ENCODE measurements at regions of chr10 and their contacts with region 1.

Region 1: DNA sequence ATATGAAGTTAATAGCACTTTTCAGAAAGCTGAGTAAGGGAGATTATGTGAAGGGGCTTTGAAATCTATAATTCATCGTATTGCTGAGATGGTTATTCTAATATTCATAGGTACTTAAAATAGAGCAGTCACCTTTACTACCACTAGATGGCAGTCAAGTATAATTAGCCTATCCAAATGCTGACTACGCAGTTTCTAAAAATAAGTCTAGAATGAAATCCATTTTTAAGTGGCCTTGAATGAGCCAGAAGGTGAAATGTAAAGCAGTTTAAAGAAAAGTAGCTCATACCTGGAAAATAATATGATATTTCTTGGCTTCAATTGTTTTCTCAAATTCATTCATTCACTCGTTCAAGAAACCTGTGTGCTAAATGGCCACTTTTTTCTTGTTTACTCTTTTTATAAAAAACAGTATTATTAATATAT is 1277.1 kb downstream of the GATA3 start:
- DNase-seq: no peak
- ATAC-seq: peak; percentile 79
- H3K4me3 ChIP-seq: no peak overlapping the region
- H3K27ac ChIP-seq: no peak overlapping the region
- H3K4me1 ChIP-seq: no peaks in the 10 kb centered on the region
- H3K27me3 ChIP-seq: no peaks in the 10 kb centered on the region
- CTCF ChIP-seq: peak; percentile 59 to 78 (median 66)
- EP300 ChIP-seq: no peak
- POLR2A ChIP-seq: no peak
- RAD21 ChIP-seq: peak; percentile 78

Region 2: GRCh38 chr10:9043466-9043865 is 288.1 kb before region 1 on chr10:
- CTCF ChIA-PET with region 1: no interaction called
- POLR2A ChIA-PET with region 1: no interaction called
- RAD21 ChIA-PET with region 1: no interaction called
- SMC1A ChIA-PET with region 1: no interaction called
- in situ Hi-C with region 1: no loop called
- intact Hi-C with region 1: no loop called
- DNase-seq: no peak
- ATAC-seq: no peak
- H3K4me3 ChIP-seq: no peak overlapping the region
- H3K27ac ChIP-seq: no peak overlapping the region
- H3K4me1 ChIP-seq: no peaks in the 10 kb centered on the region
- H3K27me3 ChIP-seq: no peaks in the 10 kb centered on the region
- CTCF ChIP-seq: no peak
- EP300 ChIP-seq: no peak
- POLR2A ChIP-seq: no peak
- RAD21 ChIP-seq: no peak

Region 3: DNA sequence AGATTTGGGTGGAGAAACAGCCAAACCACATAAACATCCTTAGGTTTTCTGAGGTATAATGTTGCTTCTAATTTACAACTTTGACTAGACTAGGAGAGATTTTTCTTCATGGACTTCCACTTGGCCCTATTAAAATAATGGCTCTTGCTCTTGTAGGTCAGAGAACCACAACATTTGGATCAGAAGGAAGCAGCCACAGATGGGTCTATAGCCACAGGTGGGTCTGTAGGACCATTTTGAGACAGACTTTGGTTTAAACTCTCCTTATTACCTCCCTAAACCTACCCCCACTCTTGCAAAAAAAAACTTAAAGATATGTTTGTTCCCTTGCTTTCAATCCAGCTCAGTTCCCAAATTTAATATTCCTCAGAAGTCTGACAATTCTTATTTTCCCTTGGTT is 16.3 kb before region 1 on chr10:
- CTCF ChIA-PET with region 1: interaction called, 4 read pairs
- POLR2A ChIA-PET with region 1: no interaction called
- RAD21 ChIA-PET with region 1: no interaction called
- SMC1A ChIA-PET with region 1: interaction called, 4 read pairs
- in situ Hi-C with region 1: no loop called
- intact Hi-C with region 1: loop called (anchors 1 kb)
- DNase-seq: no peak
- ATAC-seq: no peak
- H3K4me3 ChIP-seq: no peak overlapping the region
- H3K27ac ChIP-seq: no peak overlapping the region
- H3K4me1 ChIP-seq: no peaks in the 10 kb centered on the region
- H3K27me3 ChIP-seq: no peaks in the 10 kb centered on the region; a peak in 1 of 4 replicates
- CTCF ChIP-seq: no peak
- EP300 ChIP-seq: no peak
- POLR2A ChIP-seq: no peak
- RAD21 ChIP-seq: no peak

Region 4: GRCh38 chr10:10677479-10677878 is 1345.9 kb after region 1 on chr10:
- CTCF ChIA-PET with region 1: interaction called, 3 read pairs
- POLR2A ChIA-PET with region 1: no interaction called
- RAD21 ChIA-PET with region 1: no interaction called
- SMC1A ChIA-PET with region 1: no interaction called
- in situ Hi-C with region 1: loop called (anchors 5 kb)
- intact Hi-C with region 1: loop called (anchors 1 kb)
- DNase-seq: peak; percentile 11
- ATAC-seq: peak; percentile 83
- H3K4me3 ChIP-seq: no peak overlapping the region
- H3K27ac ChIP-seq: no peak overlapping the region
- H3K4me1 ChIP-seq: 0 out of 2 replicates have a peak, but pooled peaks cover 5% of the 10 kb centered on the region
- H3K27me3 ChIP-seq: no peaks in the 10 kb centered on the region
- CTCF ChIP-seq: peak in 2 of 3 experiments; percentile 47 to 51; a peak in 4 of 6 replicates
- EP300 ChIP-seq: no peak
- POLR2A ChIP-seq: no peak
- RAD21 ChIP-seq: peak; percentile 73

Region 5: DNA sequence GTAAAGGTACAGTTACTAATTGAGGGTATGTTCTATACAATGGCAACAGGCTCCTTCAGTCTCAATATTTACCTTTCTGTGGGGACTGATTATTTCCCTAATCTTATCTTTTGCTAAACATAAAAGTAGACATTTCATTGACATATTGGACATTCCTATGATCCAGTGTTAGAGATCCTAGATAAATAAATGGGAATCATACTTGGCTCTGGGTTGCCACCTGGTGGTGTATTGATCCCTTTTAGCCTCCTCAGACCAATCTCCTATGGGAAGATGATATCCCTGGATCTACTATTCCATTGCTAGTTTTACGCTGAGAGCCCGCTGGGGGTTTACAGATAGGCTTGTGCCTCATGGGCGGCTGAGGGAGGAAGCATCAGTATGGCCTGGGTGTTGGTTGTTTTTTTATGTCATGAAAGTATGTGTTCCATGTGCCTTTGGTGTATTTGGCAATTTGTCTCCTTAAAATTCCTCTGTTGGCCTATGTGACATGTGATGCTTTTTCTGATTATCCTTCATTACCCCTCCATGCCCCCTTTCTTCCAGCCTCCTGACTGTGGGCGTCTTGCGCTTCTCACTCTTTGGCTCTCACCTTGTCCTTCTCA is 1704.9 kb after region 1 on chr10:
- CTCF ChIA-PET with region 1: no interaction called
- POLR2A ChIA-PET with region 1: no interaction called
- RAD21 ChIA-PET with region 1: no interaction called
- SMC1A ChIA-PET with region 1: no interaction called
- in situ Hi-C with region 1: loop called (anchors 25 kb)
- intact Hi-C with region 1: loop called (anchors 10 kb)
- DNase-seq: no peak
- ATAC-seq: no peak
- H3K4me3 ChIP-seq: no peak overlapping the region
- H3K27ac ChIP-seq: no peak overlapping the region
- H3K4me1 ChIP-seq: no peaks in the 10 kb centered on the region
- H3K27me3 ChIP-seq: 0 out of 4 replicates have a peak, but pooled peaks cover 0 to 2% of the 10 kb centered on the region in 2 experiments
- CTCF ChIP-seq: peak; percentile 19 to 34 (median 27); a peak in 4 of 6 replicates
- EP300 ChIP-seq: no peak
- POLR2A ChIP-seq: no peak
- RAD21 ChIP-seq: peak; percentile 20; the same call in 1 of the 2 replicates